Aorta (tissue), 5 donors: ENCODE measurements at regions of chr15 and their contacts with region 1.

Region 1: GRCh38 chr15:50192926-50193620 is 11.1 kb downstream of the SLC27A2 start:
- DNase-seq: no peak
- ATAC-seq: no peak
- H3K4me3 ChIP-seq: no peak overlapping the region
- H3K27ac ChIP-seq: no peak overlapping the region
- H3K4me1 ChIP-seq: no peaks in the 10 kb centered on the region
- H3K27me3 ChIP-seq: peaks cover 0 to 2% of the 10 kb centered on the region in 2 donors

Region 2: GRCh38 chr15:50182219-50183013 is 10.7 kb before region 1 on chr15:
- intact Hi-C with region 1: loop called in 1 of 2 experiments (anchors 2 kb)
- DNase-seq: peak in 1 of 2 donors; percentile 53
- ATAC-seq: peak; percentile 55
- H3K4me3 ChIP-seq: peak overlapping the region; percentile 6 to 22
- H3K27ac ChIP-seq: no peak overlapping the region
- H3K4me1 ChIP-seq: no peaks in the 10 kb centered on the region
- H3K27me3 ChIP-seq: peaks cover 0 to 4% of the 10 kb centered on the region in 2 donors

Region 3: DNA sequence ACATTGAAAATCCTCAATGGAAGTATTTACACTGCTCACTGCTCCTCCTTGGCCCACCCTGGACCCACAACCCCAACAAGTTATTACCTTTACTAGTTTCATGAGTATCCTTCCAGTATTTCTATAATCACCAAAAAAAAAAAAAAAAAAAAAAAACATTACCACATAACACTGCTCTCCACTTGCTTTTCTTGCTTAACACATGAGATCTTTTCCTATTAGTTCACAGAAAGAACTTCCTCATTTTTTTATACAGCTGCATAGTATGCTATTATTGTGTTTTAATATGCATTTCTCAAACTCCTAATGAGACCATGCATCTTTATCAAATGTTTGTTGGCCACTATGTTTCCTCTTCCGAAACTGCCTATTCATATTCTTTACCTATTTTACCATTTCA is 147.3 kb after region 1 on chr15:
- intact Hi-C with region 1: no loop called
- DNase-seq: no peak
- ATAC-seq: no peak
- H3K4me3 ChIP-seq: no peak overlapping the region
- H3K27ac ChIP-seq: no peak overlapping the region
- H3K4me1 ChIP-seq: no peaks in the 10 kb centered on the region
- H3K27me3 ChIP-seq: no peaks in the 10 kb centered on the region